Activated CD4-positive, alpha-beta T cell treated with anti-CD3 and anti-CD28 coated beads for 36 hours (primary cell): ENCODE measurements at regions of chr1 and their contacts with region 1.

Region 1: DNA sequence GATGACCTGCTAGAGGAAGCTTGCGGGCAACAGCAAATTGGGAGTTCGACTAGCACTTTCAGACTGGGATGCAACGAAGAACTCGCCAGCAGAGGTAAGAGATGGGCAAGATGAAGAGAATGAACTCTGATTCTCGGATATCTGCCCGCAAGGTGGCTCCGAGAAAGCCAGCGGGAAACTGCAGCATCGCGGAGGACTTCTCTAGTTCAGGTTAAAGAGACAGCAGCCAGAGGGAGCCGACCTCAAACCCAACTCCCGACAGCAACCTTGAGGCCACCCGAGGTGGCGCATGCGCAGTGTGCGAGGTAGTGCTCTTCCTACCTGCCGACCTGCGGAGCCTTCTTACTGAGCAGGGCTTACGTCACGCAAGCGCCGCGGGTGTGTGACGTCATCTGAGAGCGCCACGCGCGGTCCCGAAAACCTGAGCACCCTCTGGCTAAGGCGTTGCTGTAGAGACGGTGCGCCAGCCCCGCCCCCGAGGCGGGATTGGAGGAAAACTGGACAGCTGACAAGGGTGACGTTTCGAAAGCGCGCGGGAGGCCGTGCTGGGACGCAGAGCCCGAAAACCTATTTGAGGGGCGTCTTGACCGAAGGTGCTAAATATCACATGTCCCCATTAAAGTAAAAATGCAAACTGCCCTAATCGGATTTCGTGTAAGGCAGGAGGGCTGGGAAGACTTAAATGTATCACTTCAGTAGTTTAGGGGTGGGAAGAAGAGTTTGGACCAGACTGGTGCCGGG is 110.5 kb upstream of the SLC25A33 start:
- DNase-seq: peak; percentile 100
- ATAC-seq: peak; percentile 91
- H3K4me3 Mint-ChIP-seq: peak overlapping the region; percentile 86
- H3K27ac Mint-ChIP-seq: peak overlapping the region; percentile 98
- H3K4me1 Mint-ChIP-seq: peaks cover 47% of the 10 kb centered on the region
- H3K27me3 Mint-ChIP-seq: no peaks in the 10 kb centered on the region

Region 2: DNA sequence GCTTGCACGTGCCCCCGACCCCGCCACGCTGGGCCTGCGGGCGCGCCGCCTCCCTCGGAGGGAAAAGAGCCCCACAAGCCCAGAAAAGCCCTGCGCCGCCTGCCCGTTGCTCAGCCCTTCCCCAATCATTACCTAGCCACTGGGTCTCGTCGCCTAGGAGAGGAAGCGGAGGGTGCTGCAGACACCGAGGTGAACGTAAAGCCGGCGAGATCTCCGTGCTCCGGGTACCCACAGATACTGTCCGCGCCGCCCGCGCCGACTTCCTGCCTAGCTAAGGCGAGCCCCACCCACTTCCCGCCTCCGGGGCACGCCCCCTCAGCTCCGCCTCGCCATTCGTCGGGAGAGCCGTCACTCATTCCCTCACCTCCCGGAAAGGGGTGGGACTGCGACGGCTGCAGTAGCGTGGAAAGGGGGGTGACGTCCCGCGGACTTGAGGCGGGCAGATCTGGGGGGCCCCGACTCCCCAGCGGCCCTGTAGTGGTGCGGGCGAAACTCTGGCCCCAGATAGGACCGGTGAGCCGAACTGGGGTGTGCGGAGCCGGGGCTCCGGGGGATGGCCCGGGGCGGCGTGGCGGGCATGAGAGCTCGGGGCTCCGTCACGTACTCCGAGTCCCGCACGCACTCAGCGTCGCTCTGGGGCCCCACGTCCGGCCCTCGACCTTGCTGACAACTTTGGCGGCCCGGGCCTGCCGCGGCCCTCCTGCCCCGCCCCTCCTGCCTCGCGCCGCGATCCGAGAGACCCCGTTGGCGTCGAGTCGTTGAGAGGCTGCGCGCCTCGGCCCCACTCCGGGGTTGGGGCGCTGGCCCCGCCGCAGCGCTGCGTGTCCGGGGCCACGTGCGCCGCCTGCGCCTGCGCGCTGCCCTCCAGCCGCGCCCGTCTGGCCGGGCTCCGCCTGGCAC is 550.1 kb before region 1 on chr1 and contains the start of gene ENO1:
- CTCF ChIA-PET with region 1: no interaction called
- POLR2A ChIA-PET with region 1: no interaction called
- intact Hi-C with region 1: loop called in 1 of 2 experiments (anchors 1 kb)
- DNase-seq: peak; percentile 99
- ATAC-seq: peak; percentile 72
- H3K4me3 Mint-ChIP-seq: peak within 1 kb of the TSS; percentile 90
- H3K27ac Mint-ChIP-seq: peak within 1 kb of the TSS; percentile 99
- H3K4me1 Mint-ChIP-seq: peaks cover 35% of the 10 kb centered on the region
- H3K27me3 Mint-ChIP-seq: no peaks in the 10 kb centered on the region
- total RNA-seq, gene ENO1: 2,573 to 3,583 TPM

Region 3: DNA sequence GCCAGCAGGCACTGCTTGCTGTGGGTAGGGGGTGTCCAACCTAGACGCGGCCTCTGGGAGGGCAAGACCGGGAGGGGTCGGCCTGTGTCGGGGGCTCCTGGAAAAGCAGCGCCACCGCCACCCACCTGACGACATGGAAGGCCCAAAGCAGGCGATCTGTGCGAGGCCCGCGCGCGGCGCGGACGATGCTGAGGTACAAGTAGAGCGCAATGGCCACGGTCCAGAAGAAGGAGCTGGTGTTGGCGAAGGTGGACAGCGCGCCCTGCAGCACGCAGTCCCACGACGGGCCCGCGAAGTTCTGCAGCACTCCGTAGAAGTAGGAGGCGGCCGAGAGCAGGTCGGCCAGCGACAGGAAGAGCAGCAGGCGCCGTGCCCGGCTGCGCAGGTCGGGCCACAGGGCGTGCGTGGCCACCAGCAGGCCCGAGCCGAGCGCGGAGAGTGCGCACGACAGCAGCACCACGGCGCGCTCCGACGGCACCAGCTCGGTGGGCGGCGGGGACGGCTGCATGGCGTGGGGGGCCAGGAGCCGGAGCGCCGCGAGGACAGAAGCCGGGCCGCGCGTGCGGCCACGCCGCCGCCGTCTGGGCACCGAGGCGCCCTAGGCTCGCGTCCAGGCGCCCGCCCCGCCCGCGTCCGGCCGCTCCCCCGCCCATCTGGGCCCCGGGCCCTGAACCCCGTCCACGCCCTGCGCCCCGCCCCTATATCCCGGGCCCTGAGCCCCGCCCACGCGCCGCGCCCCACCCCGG is 300.1 kb before region 1 on chr1 and contains the start of gene GPR157:
- CTCF ChIA-PET with region 1: no interaction called
- POLR2A ChIA-PET with region 1: no interaction called
- intact Hi-C with region 1: loop called in 1 of 2 experiments (anchors 1 kb)
- DNase-seq: peak; percentile 93
- ATAC-seq: peak; percentile 84
- H3K4me3 Mint-ChIP-seq: peak within 1 kb of the TSS; percentile 83
- H3K27ac Mint-ChIP-seq: peak within 1 kb of the TSS; percentile 67
- H3K4me1 Mint-ChIP-seq: peaks cover 37% of the 10 kb centered on the region
- H3K27me3 Mint-ChIP-seq: no peaks in the 10 kb centered on the region
- total RNA-seq, gene GPR157: 2.7 to 3.6 TPM

Region 4: GRCh38 chr1:9275567-9276034 is 153.2 kb before region 1 on chr1:
- CTCF ChIA-PET with region 1: no interaction called
- POLR2A ChIA-PET with region 1: no interaction called
- intact Hi-C with region 1: loop called in 1 of 2 experiments (anchors 1 kb)
- DNase-seq: peak; percentile 93
- ATAC-seq: peak; percentile 89
- H3K4me3 Mint-ChIP-seq: peak overlapping the region; percentile 2
- H3K27ac Mint-ChIP-seq: peak overlapping the region; percentile 47
- H3K4me1 Mint-ChIP-seq: peaks cover 33% of the 10 kb centered on the region
- H3K27me3 Mint-ChIP-seq: no peaks in the 10 kb centered on the region

Region 5: GRCh38 chr1:9413148-9413876 is 15.5 kb before region 1 on chr1:
- CTCF ChIA-PET with region 1: interaction called, 11 read pairs
- POLR2A ChIA-PET with region 1: interaction called, 8 read pairs
- intact Hi-C with region 1: loop called (anchors 1 kb)
- DNase-seq: peak; percentile 90
- ATAC-seq: peak; percentile 89
- H3K4me3 Mint-ChIP-seq: no peak overlapping the region
- H3K27ac Mint-ChIP-seq: peak overlapping the region; percentile 55
- H3K4me1 Mint-ChIP-seq: peaks cover 50% of the 10 kb centered on the region
- H3K27me3 Mint-ChIP-seq: peaks cover 3% of the 10 kb centered on the region

Region 6: DNA sequence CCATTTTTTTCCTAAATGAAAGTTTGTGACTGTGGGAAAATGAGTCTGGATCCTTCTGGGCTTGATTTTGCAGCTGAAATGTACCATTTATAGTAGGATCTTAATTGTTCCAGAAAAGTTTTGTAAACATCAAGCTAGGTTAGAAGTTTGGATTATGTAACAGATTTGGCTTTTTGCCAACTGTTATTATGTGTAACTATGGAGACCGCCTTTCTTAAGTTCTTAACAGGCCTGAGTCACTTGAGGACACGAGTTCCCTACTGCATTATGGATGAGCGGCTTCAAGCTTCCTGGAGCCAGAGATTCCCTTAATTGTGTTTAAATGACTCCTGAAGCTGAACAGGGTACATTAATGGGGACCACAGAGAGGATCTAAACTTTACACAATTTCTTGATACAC is 132.7 kb after region 1 on chr1:
- CTCF ChIA-PET with region 1: no interaction called
- POLR2A ChIA-PET with region 1: no interaction called
- intact Hi-C with region 1: no loop called
- DNase-seq: no peak
- ATAC-seq: no peak
- H3K4me3 Mint-ChIP-seq: no peak overlapping the region
- H3K27ac Mint-ChIP-seq: no peak overlapping the region
- H3K4me1 Mint-ChIP-seq: peaks cover 29% of the 10 kb centered on the region
- H3K27me3 Mint-ChIP-seq: no peaks in the 10 kb centered on the region

Region 7: DNA sequence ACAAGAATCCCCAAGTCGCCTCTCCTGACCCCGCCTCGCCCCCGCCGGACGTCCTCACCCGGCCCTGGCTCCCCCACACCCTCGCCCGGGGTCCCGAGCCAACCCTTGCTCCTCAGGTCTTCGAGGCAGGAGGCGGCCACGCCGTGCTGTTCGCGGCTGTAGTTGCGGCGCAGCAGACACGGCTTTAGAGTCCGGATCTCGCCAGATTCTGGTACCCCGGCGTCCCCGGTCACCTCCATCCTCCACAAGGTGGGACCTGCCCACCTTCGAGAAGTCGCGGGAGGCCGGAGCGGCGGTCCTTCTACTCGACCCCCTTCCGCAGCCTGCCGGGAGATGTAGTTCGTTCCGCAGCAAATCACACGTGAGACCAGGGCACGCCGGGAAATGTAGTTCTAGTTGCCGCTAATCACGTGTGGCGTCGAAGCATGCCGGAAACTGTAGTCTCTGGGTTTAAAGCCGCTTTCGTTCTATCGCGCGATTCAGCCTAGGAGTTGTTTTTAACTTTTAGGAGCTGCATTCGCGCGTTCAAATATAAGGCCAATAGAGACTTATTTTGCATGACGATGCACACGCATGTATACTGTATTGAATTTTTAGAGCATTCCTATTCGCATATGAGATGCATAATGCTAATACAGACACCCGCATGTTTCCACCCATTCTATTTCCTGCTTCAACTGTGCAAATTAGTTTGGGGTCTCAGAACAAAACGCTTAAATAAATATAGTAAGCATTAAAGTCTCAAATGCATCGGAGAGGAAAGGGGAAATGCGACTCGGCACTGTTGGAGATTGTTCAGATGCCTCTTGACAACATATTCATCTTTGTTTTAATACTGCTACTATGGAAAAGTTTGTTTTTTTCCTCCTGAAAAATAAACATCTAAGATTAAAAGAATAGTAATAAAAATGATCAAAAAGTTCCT is 1043.7 kb after region 1 on chr1 and contains the start of gene DFFA:
- CTCF ChIA-PET with region 1: no interaction called
- POLR2A ChIA-PET with region 1: no interaction called
- intact Hi-C with region 1: loop called in 1 of 2 experiments (anchors 5 kb)
- DNase-seq: peak; percentile 96
- ATAC-seq: peak; percentile 83
- H3K4me3 Mint-ChIP-seq: peak within 1 kb of the TSS; percentile 97
- H3K27ac Mint-ChIP-seq: peak within 1 kb of the TSS; percentile 92
- H3K4me1 Mint-ChIP-seq: peaks cover 38% of the 10 kb centered on the region
- H3K27me3 Mint-ChIP-seq: no peaks in the 10 kb centered on the region
- total RNA-seq, gene DFFA: 45.7 to 46.4 TPM